ENCODE measurements at regions of chr4 and their contacts with region 1.

Region 1: DNA sequence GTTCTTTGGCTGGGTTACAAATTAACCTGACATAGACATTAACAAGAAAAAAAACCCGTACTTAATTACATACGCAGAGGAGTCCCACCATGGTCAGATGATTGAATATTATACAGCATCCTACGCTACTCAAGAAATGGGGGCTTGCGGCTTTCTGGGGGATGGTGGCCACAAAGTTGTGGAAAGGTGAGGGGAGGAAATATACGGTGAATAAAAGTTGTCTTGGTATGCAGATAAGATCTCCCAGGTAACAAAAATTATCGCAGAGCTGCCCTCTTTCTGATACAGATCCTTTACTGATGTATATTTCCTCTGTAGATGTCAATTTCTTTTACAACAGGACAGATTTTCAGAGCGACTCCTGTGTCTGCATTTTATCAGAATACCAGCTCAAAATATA is 890 bp downstream of the DCAF16 start:
- DNase-seq: no peak
- H3K4me3 ChIP-seq: peak overlapping the region; percentile 62 to 96 (median 86)
- H3K27ac ChIP-seq: peak overlapping the region; percentile 96 to 100 (median 96)
- H3K4me1 ChIP-seq: peaks cover 22 to 65% (median 31%) of the 10 kb centered on the region in 3 donors
- H3K27me3 ChIP-seq: no peaks in the 10 kb centered on the region
- CTCF ChIP-seq: no peak
- POLR2A ChIP-seq: no peak

Region 2: DNA sequence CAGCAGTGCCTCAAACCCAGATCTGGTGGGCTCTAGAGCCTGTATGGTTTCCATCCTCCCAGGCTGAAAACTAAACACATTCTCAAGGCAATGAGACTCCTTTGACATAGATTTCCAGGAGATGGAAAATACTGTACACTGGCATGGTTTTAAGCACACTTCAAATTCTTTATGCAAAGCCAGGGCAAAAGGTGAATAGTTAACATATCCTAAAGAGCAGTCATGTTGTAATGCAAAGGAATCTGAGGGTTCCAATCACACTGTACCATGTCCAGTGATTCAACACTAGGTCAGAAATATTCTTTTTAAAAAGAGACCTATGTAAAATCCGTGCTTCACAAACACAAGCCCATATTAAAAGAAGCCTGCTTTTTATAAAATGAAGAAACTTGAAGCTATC is 493.1 kb before region 1 on chr4:
- intact Hi-C with region 1: no loop called
- DNase-seq: no peak
- H3K4me3 ChIP-seq: no peak overlapping the region
- H3K27ac ChIP-seq: no peak overlapping the region
- H3K4me1 ChIP-seq: no peaks in the 10 kb centered on the region
- H3K27me3 ChIP-seq: no peaks in the 10 kb centered on the region
- CTCF ChIP-seq: no peak
- POLR2A ChIP-seq: no peak

Region 3: GRCh38 chr4:17688011-17688441 is 121.6 kb before region 1 on chr4:
- intact Hi-C with region 1: no loop called
- DNase-seq: no peak
- H3K4me3 ChIP-seq: no peak overlapping the region
- H3K27ac ChIP-seq: no peak overlapping the region
- H3K4me1 ChIP-seq: no peaks in the 10 kb centered on the region
- H3K27me3 ChIP-seq: no peaks in the 10 kb centered on the region
- CTCF ChIP-seq: no peak
- POLR2A ChIP-seq: no peak

Region 4: DNA sequence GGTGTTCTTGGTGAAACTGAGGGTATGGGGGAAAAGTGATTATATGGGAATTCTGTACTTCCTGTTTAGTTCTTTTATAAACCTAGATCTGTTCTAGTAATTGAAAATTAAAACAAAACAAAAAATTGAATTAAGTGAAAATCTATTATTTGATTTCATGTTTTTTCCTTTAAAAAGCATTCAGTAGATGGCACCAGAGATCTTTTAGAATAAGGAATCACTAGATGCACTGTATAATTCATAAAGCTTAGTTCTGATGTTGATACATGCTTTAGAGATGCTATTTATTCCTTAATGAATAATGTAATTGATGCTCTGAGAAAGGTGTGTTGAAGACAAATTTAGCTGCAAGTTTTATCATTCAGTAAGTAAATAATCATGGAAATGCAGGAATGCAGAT is 124.6 kb after region 1 on chr4:
- intact Hi-C with region 1: no loop called
- DNase-seq: no peak
- H3K4me3 ChIP-seq: no peak overlapping the region
- H3K27ac ChIP-seq: no peak overlapping the region
- H3K4me1 ChIP-seq: no peaks in the 10 kb centered on the region
- H3K27me3 ChIP-seq: no peaks in the 10 kb centered on the region
- CTCF ChIP-seq: peak in 1 of 6 experiments; percentile 6
- POLR2A ChIP-seq: no peak

Region 5: DNA sequence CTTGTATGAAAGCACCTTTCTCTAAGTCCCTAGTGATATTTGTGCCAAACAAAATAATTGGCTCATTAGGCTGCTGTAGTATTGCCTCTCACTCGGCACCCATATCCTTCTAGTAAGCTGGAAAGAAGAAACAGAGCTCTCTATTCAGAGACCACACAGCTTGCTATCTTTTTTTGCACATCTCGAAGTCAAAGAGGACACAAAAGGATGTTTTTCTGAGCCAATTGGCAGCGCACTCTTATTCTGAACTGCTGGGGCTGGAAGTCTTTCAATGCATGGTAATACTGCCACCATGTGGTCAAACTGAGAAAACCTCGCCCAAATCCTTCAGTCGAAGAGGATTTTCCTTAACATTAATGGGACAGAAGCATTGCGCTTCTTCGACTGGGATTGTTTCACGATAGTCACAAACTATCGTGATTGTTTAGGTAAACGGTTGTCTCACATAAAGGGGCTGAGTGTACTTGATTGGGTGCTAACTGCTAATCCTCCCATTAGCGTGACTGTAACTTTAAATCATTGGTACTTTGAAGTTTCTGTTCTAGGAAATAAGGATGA is 783.9 kb after region 1 on chr4:
- intact Hi-C with region 1: loop called (anchors 10 kb)
- DNase-seq: no peak
- H3K4me3 ChIP-seq: no peak overlapping the region
- H3K27ac ChIP-seq: no peak overlapping the region
- H3K4me1 ChIP-seq: peaks cover 0 to 8% (median 3%) of the 10 kb centered on the region in 3 donors
- H3K27me3 ChIP-seq: peaks cover 0 to 5% (median 0%) of the 10 kb centered on the region in 4 donors
- CTCF ChIP-seq: peak; percentile 52 to 81 (median 70)
- POLR2A ChIP-seq: no peak